Transverse colon (tissue), 4 donors: ENCODE measurements at regions of chr12 and their contacts with region 1.

Region 1: GRCh38 chr12:99852666-99853065 is 132.1 kb downstream of the ANKS1B start:
- DNase-seq: no peak
- H3K4me3 ChIP-seq: no peak overlapping the region
- H3K27ac ChIP-seq: no peak overlapping the region
- H3K4me1 ChIP-seq: no peaks in the 10 kb centered on the region
- H3K27me3 ChIP-seq: no peaks in the 10 kb centered on the region
- CTCF ChIP-seq: no peak
- EP300 ChIP-seq: no peak
- POLR2A ChIP-seq: no peak

Region 2: DNA sequence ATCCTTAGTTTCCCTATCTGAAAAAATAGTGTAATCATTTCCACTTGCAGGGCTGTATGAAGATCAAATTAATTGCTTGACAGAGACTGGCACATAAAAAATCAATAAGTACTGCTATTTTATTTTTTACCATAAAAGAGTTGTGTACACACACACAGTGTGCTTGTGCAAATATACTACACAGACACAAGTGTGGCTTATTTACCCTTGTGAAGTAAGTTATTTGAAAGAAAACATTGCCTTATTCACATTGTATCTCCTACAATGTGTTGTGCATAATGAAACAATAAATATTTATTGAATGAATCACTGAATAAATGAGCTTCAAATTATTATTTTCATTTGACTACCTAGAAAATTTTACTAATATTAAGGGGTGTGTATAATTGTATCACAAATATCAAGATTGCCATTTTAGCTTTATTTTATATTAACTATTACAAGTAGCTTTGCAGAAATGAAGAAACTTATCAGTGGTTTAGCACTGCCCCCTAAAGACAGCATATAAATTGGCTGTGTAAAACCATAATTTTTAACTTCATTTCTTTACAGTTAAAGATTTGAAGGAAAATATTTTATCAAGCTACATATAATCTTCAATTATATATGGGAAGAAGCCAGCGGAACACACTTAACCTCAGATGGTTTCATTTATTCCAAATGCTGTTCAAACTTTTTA is 193.9 kb before region 1 on chr12:
- in situ Hi-C with region 1: no loop called
- intact Hi-C with region 1: no loop called
- DNase-seq: no peak
- H3K4me3 ChIP-seq: no peak overlapping the region
- H3K27ac ChIP-seq: no peak overlapping the region
- H3K4me1 ChIP-seq: no peaks in the 10 kb centered on the region
- H3K27me3 ChIP-seq: no peaks in the 10 kb centered on the region
- CTCF ChIP-seq: no peak
- EP300 ChIP-seq: no peak
- POLR2A ChIP-seq: no peak

Region 3: DNA sequence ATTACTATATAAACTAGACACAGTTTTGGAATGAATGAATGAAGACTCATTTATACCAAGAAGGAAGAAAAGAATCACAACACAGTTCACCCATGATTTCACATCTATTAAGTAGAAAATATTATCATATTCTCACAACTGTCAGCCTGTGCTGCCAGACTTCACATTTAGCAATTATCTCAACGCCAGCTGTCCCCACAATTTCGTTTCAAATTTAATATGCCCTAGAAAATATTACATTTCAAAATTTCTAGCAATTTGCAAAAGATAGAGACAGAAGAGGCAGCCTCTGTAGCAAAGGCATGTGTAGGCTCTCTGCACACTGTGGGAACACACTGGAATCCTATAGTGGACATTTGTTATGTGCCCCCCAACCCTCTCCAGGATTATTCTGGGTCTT is 48.5 kb after region 1 on chr12:
- in situ Hi-C with region 1: no loop called
- intact Hi-C with region 1: loop called (anchors 2 kb)
- DNase-seq: no peak
- H3K4me3 ChIP-seq: no peak overlapping the region
- H3K27ac ChIP-seq: no peak overlapping the region
- H3K4me1 ChIP-seq: no peaks in the 10 kb centered on the region
- H3K27me3 ChIP-seq: no peaks in the 10 kb centered on the region
- CTCF ChIP-seq: no peak
- EP300 ChIP-seq: no peak
- POLR2A ChIP-seq: no peak